Thyroid gland (tissue), 4 donors: ENCODE measurements at regions of chr11 and their contacts with region 1.

Region 1: DNA sequence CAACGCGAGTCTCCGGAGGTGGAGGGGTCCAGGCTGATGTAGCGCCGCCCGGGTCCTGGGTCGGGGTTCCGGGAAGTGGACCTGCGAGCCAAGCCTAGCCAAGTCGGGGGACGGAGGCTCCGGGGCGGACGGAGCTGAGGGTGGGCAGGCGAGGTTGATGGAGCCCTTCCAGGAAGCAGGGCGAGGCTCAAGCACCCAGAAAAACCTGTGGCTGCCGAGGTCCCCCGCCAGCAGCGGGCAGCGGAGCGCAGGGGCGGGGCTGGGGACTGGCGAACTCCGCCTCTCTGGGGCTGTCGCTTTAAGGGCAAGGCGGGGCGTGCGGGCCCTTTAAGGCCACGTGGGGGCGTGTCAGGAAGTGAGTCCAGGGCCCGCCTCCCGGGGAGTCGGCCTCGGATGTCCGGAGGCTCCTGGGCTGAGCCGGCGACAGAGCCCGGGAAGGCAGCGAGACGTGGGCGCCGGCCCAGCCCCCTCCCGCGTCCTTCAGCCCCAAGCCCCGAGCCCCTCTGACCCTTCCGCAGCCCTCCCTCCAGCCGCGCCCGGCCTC is at the start of gene SLC35C1:
- DNase-seq: peak; percentile 97 to 98
- H3K4me3 ChIP-seq: peak within 1 kb of the TSS; percentile 85 to 92 (median 89)
- H3K27ac ChIP-seq: peak within 1 kb of the TSS; percentile 67 to 83 (median 79)
- H3K4me1 ChIP-seq: peaks cover 25 to 35% of the 10 kb centered on the region in 2 donors
- H3K27me3 ChIP-seq: no peaks in the 10 kb centered on the region
- CTCF ChIP-seq: no peak
- POLR2A ChIP-seq: peak; percentile 13 to 82
- total RNA-seq, gene SLC35C1: 11.2 to 15.8 (median 14.0) TPM

Region 2: DNA sequence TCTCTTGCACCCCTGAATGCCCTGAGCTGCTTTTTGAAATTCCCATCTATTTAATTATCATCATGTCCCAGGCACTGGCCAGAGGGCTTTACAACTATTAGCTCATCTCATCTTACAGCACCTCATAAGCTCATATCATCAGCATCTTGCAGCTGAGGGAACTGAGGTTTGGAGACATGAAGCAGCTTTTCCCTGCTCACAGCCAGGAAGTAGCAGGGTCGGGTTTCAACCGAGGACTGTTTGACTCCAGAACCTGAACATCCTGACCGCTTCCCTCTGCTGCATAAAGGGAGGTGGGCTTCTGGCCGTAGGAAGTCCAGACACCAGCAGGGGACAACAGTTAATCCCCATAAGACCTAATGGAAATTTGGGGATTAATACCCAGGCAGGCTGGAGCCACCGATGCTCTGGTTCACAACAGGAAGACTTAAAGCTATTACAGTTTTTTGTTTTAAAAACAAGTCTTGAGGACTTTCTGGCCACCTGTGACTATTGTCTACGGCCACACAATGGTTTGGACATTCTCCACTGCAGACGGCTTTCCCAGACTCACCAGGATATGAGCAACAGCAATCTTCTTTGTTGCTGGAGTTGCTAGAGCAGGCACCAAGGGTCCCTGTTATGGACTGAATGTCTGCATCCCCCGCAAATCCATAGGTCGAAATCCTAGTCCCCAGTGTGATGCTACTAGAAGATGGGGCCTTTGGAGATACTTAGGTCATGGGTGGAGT is 186.8 kb before region 1 on chr11:
- intact Hi-C with region 1: no loop called
- DNase-seq: no peak
- H3K4me3 ChIP-seq: no peak overlapping the region
- H3K27ac ChIP-seq: no peak overlapping the region
- H3K4me1 ChIP-seq: peaks cover 16 to 17% of the 10 kb centered on the region in 2 donors
- H3K27me3 ChIP-seq: no peaks in the 10 kb centered on the region
- CTCF ChIP-seq: no peak
- POLR2A ChIP-seq: no peak

Region 3: GRCh38 chr11:45791485-45791884 is 13.3 kb before region 1 on chr11:
- intact Hi-C with region 1: no loop called
- DNase-seq: no peak
- H3K4me3 ChIP-seq: no peak overlapping the region
- H3K27ac ChIP-seq: no peak overlapping the region
- H3K4me1 ChIP-seq: no peaks in the 10 kb centered on the region
- H3K27me3 ChIP-seq: no peaks in the 10 kb centered on the region
- CTCF ChIP-seq: no peak
- POLR2A ChIP-seq: no peak

Region 4: GRCh38 chr11:45917623-45918330 is 112.9 kb after region 1 on chr11 and contains the start of gene PEX16:
- intact Hi-C with region 1: loop called (anchors 10 kb)
- DNase-seq: peak; percentile 98 to 99
- H3K4me3 ChIP-seq: peak within 1 kb of the TSS; percentile 43 to 76 (median 73)
- H3K27ac ChIP-seq: peak within 1 kb of the TSS; percentile 46 to 80 (median 71)
- H3K4me1 ChIP-seq: peaks cover 27 to 43% of the 10 kb centered on the region in 2 donors
- H3K27me3 ChIP-seq: no peaks in the 10 kb centered on the region
- CTCF ChIP-seq: no peak
- POLR2A ChIP-seq: peak; percentile 20 to 79
- total RNA-seq, gene PEX16: 28.5 to 41.2 (median 29.5) TPM

Region 5: DNA sequence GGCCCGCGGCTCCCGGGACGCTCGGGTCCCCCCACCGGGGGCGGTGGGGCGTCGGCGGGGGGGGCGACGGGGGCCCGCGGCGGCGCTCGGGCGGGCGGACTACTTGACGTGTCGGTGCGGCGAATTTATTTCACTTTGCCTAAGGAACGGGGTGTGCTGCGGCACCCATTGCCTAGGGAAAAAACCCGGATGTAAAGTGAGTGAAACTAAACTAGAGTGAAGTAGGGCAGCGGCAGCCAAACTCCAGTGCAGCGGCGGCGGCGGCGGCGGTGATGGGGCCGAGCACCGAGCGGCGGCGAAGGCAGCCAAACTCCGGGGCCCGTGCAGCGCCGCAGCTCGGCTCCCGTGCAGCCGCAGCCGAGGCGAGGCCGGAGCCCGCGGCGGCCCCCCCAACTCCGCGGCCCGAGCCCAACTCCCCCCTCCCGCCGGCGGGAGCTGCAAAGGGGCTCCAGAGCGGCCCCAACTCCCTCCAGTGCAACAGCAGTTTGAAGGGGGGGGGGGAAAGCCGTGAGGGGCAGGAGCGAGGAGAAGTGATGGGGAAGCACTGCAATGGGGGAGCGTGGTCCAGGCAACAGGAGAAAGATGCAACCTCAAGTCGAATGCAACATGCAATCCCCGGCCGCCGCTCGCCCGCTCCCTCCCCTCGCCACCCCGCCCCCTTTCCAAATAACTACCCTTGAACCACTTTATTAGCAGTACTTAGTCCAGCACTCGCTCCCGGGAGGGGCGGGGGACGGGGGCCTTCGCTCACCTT is 317.1 kb after region 1 on chr11:
- intact Hi-C with region 1: no loop called
- DNase-seq: peak; percentile 73 to 80
- H3K4me3 ChIP-seq: peak overlapping the region in 2 of 3 donors; percentile 45 to 87
- H3K27ac ChIP-seq: peak overlapping the region; percentile 59 to 80 (median 74)
- H3K4me1 ChIP-seq: peaks cover 19 to 20% of the 10 kb centered on the region in 2 donors
- H3K27me3 ChIP-seq: no peaks in the 10 kb centered on the region
- CTCF ChIP-seq: no peak
- POLR2A ChIP-seq: peak in 1 of 2 donors; percentile 26

Region 6: DNA sequence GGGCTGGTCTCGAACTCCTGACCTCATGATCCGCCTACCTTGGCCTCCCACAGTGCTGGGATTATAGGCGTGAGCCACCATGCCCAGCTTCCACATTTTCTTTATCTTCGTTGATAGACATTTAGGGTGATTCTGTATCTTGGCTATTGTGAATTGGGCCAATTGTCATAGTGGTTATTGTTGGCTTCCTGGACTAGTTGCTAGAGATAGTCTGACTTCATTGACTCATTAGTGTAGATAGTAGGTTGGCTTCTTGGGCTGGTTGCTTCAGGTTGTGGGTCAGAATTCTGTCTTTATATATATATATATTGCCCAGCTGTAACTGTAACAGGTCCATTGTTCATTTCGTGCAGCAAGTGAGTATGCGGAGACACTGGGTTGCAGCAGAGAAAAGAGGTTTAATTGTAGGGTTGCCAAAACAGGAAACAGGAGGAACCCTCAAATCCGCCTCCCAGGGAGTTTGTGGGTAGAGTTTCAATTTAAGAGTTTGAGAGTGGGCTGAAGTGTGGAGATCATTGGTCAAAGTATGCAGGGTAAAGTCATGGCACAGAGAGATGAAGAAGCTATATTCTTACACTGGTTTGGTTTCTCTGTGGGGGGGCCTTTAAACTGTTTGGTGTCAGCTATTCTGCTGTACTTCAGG is 834.5 kb after region 1 on chr11:
- intact Hi-C with region 1: no loop called
- DNase-seq: no peak
- H3K4me3 ChIP-seq: no peak overlapping the region
- H3K27ac ChIP-seq: no peak overlapping the region
- H3K4me1 ChIP-seq: no peaks in the 10 kb centered on the region
- H3K27me3 ChIP-seq: no peaks in the 10 kb centered on the region
- CTCF ChIP-seq: no peak
- POLR2A ChIP-seq: no peak